GM12878 (cell line): ENCODE measurements at regions of chr13 and their contacts with region 1.

Region 1: DNA sequence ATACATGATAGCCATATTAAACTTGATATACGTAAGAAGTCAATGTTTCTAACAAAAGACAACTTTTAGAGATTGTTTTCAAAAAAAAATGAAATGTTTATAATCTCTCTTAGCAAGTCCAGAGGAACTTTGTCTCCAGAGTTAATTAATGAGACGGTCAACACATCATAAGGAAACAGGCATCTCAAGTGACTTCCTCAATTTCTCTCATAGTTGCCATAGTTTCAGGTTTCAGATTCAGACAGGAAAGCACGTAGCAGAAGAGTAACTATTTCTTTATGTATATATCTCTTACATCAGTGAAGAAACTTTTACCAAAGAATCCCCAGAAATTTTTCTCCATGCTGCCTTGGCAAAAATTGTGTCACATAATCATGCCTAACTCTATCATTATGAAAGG is 159.6 kb upstream of the ATXN8OS start:
- DNase-seq: peak; percentile 59
- ATAC-seq: peak; percentile 97
- H3K4me3 ChIP-seq: no peak overlapping the region
- H3K27ac ChIP-seq: no peak overlapping the region; the same call in 1 of the 2 replicates
- H3K4me1 ChIP-seq: peaks cover 3% of the 10 kb centered on the region; the same call in 1 of the 2 replicates
- H3K27me3 ChIP-seq: no peaks in the 10 kb centered on the region
- CTCF ChIP-seq: no peak
- EP300 ChIP-seq: peak; percentile 69 to 80; a peak in 2 of 4 replicates
- POLR2A ChIP-seq: no peak
- RAD21 ChIP-seq: no peak

Region 2: GRCh38 chr13:69935043-69935442 is 13.0 kb before region 1 on chr13:
- CTCF ChIA-PET with region 1: interaction called, 3 read pairs
- POLR2A ChIA-PET with region 1: interaction called, 11 read pairs
- RAD21 ChIA-PET with region 1: no interaction called
- SMC1A ChIA-PET with region 1: interaction called, 3 read pairs
- in situ Hi-C with region 1: no loop called
- intact Hi-C with region 1: no loop called
- DNase-seq: no peak
- ATAC-seq: peak; percentile 100
- H3K4me3 ChIP-seq: no peak overlapping the region
- H3K27ac ChIP-seq: no peak overlapping the region
- H3K4me1 ChIP-seq: no peaks in the 10 kb centered on the region
- H3K27me3 ChIP-seq: no peaks in the 10 kb centered on the region
- CTCF ChIP-seq: peak; percentile 54 to 63 (median 57)
- EP300 ChIP-seq: no peak
- POLR2A ChIP-seq: no peak
- RAD21 ChIP-seq: 0 out of 2 replicates have a peak, but pooled peaks have one; percentile 12

Region 3: DNA sequence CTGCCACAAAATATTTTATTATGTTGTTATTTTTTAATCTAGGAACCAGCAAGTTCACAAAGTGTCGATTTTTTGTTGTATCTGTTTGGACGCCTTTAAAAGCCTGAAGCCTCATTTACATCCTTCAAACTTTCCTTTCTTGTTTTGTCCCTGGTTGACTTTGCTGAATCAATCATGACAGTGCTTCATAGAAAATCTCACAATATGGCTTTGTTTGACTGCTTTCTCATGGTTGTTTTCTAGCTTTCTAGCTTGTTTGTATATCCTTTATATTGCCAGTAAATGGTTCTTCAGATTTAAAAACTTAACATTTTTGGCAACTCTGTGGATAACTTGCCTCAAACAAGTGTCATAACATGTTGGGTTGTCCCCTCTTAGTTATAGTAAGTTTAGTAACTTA is 75.5 kb after region 1 on chr13:
- CTCF ChIA-PET with region 1: no interaction called
- POLR2A ChIA-PET with region 1: no interaction called
- RAD21 ChIA-PET with region 1: no interaction called
- SMC1A ChIA-PET with region 1: no interaction called
- in situ Hi-C with region 1: no loop called
- intact Hi-C with region 1: no loop called
- DNase-seq: no peak
- ATAC-seq: no peak
- H3K4me3 ChIP-seq: no peak overlapping the region
- H3K27ac ChIP-seq: no peak overlapping the region
- H3K4me1 ChIP-seq: no peaks in the 10 kb centered on the region
- H3K27me3 ChIP-seq: no peaks in the 10 kb centered on the region
- CTCF ChIP-seq: no peak
- EP300 ChIP-seq: no peak
- POLR2A ChIP-seq: no peak
- RAD21 ChIP-seq: no peak